ENCODE measurements at regions of chr4 and their contacts with region 1.

Region 1: GRCh38 chr4:146342600-146343192 is 128.4 kb downstream of the REELD1 start:
- DNase-seq: peak; percentile 25
- H3K4me3 ChIP-seq: no peak overlapping the region
- H3K27ac ChIP-seq: no peak overlapping the region
- H3K4me1 ChIP-seq: no peaks in the 10 kb centered on the region
- H3K27me3 ChIP-seq: no peaks in the 10 kb centered on the region
- CTCF ChIP-seq: peak; percentile 47

Region 2: DNA sequence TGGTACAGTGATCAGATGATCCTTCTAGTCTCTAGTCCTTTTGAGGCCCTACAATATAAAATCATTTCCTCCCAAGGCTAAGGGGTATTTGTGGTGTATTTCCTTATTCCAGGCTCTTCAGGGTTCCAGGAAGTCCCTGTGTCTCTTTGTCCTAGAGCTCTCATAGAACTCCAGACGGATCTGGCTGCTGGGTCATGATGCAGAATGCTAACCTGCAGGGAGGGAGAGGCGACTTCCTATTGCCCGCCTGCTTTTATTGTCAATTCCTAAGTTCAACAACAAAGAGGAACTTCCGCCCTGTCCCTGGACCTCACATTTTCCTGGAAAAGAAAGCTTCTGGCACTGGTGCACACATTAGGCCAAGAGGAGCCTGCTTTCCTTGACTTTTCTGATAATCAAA is 358.1 kb before region 1 on chr4:
- intact Hi-C with region 1: no loop called
- DNase-seq: peak; percentile 55
- H3K4me3 ChIP-seq: no peak overlapping the region
- H3K27ac ChIP-seq: no peak overlapping the region
- H3K4me1 ChIP-seq: no peaks in the 10 kb centered on the region
- H3K27me3 ChIP-seq: no peaks in the 10 kb centered on the region
- CTCF ChIP-seq: no peak

Region 3: GRCh38 chr4:146407669-146408084 is 65.0 kb after region 1 on chr4:
- intact Hi-C with region 1: no loop called
- DNase-seq: no peak
- H3K4me3 ChIP-seq: no peak overlapping the region
- H3K27ac ChIP-seq: no peak overlapping the region
- H3K4me1 ChIP-seq: no peaks in the 10 kb centered on the region
- H3K27me3 ChIP-seq: no peaks in the 10 kb centered on the region
- CTCF ChIP-seq: no peak

Region 4: DNA sequence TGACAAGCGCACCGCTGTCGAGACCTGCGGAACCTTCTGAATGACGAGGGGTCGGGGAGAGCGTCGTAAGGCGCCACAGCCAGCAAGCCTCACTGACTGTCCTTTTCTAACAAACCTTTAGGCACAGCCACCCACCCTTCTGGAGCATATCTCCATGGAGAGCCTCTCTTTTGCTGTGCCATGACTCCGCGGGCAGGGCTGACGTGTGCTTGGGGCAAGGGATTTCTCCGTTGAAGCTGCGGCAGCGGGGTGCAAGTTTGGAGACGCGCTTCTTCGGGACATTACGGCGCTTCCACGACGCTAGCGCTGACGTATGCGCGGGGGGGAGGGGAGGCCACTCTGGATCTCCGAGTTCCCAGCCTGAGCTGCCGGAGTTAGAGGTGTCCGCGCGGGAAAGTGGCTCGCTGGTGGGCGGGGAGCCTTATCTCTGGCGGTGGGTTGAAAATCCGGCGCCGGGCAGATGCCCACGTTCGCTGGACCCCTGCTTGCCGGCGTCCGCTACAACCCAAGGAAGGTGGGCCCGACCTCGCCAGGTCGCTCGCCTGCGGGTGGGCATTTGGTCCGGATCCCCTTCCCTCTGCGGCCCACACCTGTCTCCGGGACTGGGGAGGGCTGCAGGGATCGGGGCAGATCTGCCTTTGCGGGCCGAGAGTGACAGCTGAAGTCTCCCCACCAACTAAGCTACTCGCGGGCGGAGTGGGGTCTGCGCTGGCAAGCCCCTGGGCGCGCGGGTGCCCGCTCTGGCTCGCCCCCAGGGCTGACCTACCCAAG is 179.6 kb after region 1 on chr4:
- intact Hi-C with region 1: loop called (anchors 10 kb)
- DNase-seq: peak; percentile 95
- H3K4me3 ChIP-seq: peak overlapping the region; percentile 96
- H3K27ac ChIP-seq: peak overlapping the region; percentile 71
- H3K4me1 ChIP-seq: no peaks in the 10 kb centered on the region
- H3K27me3 ChIP-seq: no peaks in the 10 kb centered on the region
- CTCF ChIP-seq: no peak

Region 5: GRCh38 chr4:146738596-146738995 is 395.9 kb after region 1 on chr4:
- intact Hi-C with region 1: no loop called
- DNase-seq: no peak
- H3K4me3 ChIP-seq: no peak overlapping the region
- H3K27ac ChIP-seq: no peak overlapping the region
- H3K4me1 ChIP-seq: no peaks in the 10 kb centered on the region
- H3K27me3 ChIP-seq: no peaks in the 10 kb centered on the region
- CTCF ChIP-seq: no peak

Region 6: DNA sequence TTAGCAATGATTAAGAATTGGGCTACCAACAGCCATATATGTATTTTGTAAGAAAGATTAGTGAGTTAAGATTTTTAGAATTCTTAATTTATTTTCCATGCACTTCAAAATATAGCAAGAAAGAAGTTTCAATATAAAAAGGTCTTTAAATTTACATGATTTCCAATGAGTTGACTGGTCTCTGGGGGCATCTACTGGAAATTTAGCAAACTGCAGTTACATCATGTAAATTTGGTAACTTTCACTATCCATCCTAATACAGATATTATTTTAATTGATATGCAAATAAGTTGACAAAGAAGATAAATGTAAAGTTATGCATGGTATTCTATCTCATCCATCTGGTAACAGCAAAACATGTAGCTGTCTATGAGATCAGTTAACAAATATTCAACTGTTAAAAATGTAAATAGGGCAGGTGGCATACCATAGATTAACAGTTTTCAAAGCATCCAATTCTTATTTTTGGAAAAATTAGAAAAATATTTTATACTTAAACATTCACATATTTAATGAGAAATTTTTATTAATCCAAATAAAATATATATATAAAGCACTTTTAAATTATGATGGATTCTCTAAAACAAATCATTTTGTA is 573.9 kb after region 1 on chr4:
- intact Hi-C with region 1: loop called (anchors 5 kb)
- DNase-seq: no peak
- H3K4me3 ChIP-seq: no peak overlapping the region
- H3K27ac ChIP-seq: no peak overlapping the region
- H3K4me1 ChIP-seq: no peaks in the 10 kb centered on the region
- H3K27me3 ChIP-seq: no peaks in the 10 kb centered on the region
- CTCF ChIP-seq: peak; percentile 64

Region 7: DNA sequence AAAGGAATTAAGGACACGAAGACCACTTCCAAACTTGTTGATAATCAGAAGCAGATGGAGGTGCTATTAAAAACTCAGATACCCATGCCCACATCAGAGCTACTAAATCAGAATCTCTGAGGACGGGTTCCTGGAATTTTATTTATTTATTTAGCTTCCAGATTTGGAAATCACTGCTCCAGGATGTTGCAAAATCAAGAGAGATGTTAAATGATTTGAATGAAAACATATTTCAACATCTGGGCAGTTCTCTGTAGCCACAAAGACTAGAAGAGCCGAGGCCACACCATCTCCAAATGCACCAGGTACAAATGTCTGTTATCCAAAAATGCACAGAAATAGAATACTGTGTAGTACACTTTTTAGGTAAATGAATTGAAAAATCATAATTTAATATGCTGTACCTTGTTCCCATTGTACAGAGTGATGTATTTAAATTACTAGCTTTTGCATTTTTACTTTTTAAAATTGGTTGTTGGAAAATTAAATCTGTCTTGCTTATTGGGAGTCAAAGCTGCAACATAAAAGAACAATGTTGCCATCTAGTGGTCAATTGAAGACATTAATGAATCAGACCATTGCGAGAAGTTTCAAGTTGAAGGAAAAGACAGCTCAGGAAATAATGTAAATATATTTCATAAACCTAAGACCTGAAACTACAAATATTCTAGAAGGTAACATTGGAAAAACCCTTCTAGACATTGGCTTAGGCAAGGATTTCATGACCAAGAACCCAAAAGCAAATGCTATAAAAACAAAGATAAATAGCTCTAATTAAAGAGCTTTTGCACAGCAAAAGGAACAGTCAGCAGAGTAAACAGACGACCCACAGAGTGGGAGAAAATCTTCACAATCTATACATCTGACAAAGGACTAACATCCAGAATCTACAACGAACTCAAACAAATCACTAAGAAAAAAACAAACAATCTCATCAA is 754.2 kb after region 1 on chr4:
- intact Hi-C with region 1: loop called (anchors 10 kb)
- DNase-seq: no peak
- H3K4me3 ChIP-seq: no peak overlapping the region
- H3K27ac ChIP-seq: no peak overlapping the region
- H3K4me1 ChIP-seq: no peaks in the 10 kb centered on the region
- H3K27me3 ChIP-seq: no peaks in the 10 kb centered on the region
- CTCF ChIP-seq: peak; percentile 64